Panc1 (cell line): ENCODE measurements at regions of chr17 and their contacts with region 1.

Region 1: GRCh38 chr17:61627125-61627524 is 36.1 kb upstream of the NACA2 start:
- DNase-seq: no peak
- ATAC-seq: no peak
- H3K4me3 ChIP-seq: no peak overlapping the region
- H3K27ac ChIP-seq: no peak overlapping the region
- H3K4me1 ChIP-seq: no peaks in the 10 kb centered on the region
- H3K27me3 ChIP-seq: no peaks in the 10 kb centered on the region
- CTCF ChIP-seq: no peak

Region 2: DNA sequence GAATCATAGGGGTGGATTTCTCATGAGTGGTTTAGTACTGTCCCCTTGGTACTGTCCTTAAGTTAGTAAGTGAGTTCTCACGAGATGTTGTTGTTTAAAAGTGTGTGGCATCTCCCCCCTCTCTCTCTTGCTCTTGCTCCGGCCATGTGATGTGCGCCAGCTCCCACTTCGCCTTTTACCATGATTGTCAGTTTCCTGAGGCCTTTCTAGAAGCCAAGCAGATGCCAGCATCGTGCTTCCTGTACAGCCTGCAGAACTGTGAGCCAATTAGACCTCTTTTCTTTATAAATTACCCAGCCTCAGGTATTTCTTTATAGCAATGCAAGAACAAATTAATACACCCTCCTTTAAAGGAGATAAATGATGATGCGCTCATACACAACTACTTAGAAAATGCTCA is 14.0 kb after region 1 on chr17:
- CTCF ChIA-PET with region 1: no interaction called
- POLR2A ChIA-PET with region 1: no interaction called
- in situ Hi-C with region 1: no loop called
- intact Hi-C with region 1: no loop called
- DNase-seq: no peak
- ATAC-seq: no peak
- H3K4me3 ChIP-seq: no peak overlapping the region
- H3K27ac ChIP-seq: no peak overlapping the region
- H3K4me1 ChIP-seq: no peaks in the 10 kb centered on the region
- H3K27me3 ChIP-seq: no peaks in the 10 kb centered on the region
- CTCF ChIP-seq: no peak

Region 3: GRCh38 chr17:61662741-61663140 is 35.6 kb after region 1 on chr17:
- CTCF ChIA-PET with region 1: no interaction called
- POLR2A ChIA-PET with region 1: no interaction called
- in situ Hi-C with region 1: no loop called
- intact Hi-C with region 1: no loop called
- DNase-seq: no peak
- ATAC-seq: no peak
- H3K4me3 ChIP-seq: no peak overlapping the region
- H3K27ac ChIP-seq: no peak overlapping the region
- H3K4me1 ChIP-seq: no peaks in the 10 kb centered on the region
- H3K27me3 ChIP-seq: peaks cover 9% of the 10 kb centered on the region; the same call in 1 of the 2 replicates
- CTCF ChIP-seq: no peak

Region 4: GRCh38 chr17:62119373-62119772 is 492.2 kb after region 1 on chr17:
- CTCF ChIA-PET with region 1: interaction called, 16 read pairs
- POLR2A ChIA-PET with region 1: no interaction called
- in situ Hi-C with region 1: no loop called
- intact Hi-C with region 1: no loop called
- DNase-seq: no peak
- ATAC-seq: no peak
- H3K4me3 ChIP-seq: no peak overlapping the region
- H3K27ac ChIP-seq: no peak overlapping the region
- H3K4me1 ChIP-seq: no peaks in the 10 kb centered on the region
- H3K27me3 ChIP-seq: no peaks in the 10 kb centered on the region
- CTCF ChIP-seq: no peak